K562 (cell line): ENCODE measurements at regions of chr4 and their contacts with region 1.

Region 1: DNA sequence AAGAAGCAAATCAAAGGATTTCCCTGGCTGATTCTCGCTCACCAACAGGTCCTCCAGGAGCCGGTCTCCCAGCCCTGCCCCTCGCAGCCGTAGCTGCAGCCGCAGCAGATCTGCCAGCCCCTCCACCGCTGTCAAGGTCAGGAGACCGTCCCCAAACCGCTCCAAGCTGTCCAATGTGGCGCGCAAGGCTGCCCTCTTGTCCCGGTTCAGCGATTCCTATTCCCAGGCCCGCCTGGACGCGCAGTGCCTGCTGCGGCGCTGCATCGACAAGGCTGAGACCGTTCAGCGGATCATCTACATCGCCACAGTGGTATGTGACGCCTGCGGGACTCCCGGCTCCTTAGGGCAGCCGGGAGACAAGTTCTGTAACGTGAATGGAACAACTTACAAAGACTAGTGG is 25.6 kb downstream of the SPATA18 start:
- DNase-seq: no peak
- ATAC-seq: peak; percentile 42; the same call in 2 of the 3 replicates
- H3K4me3 ChIP-seq: no peak overlapping the region
- H3K27ac ChIP-seq: no peak overlapping the region
- H3K4me1 ChIP-seq: no peaks in the 10 kb centered on the region
- H3K27me3 ChIP-seq: peaks cover 5 to 8% of the 10 kb centered on the region in 2 experiments; a peak in 1 of 5 replicates
- CTCF ChIP-seq: no peak
- EP300 ChIP-seq: no peak
- POLR2A ChIP-seq: no peak
- RAD21 ChIP-seq: no peak

Region 2: GRCh38 chr4:52001616-52002015 is 75.1 kb before region 1 on chr4:
- CTCF ChIA-PET with region 1: no interaction called
- POLR2A ChIA-PET with region 1: no interaction called
- in situ Hi-C with region 1: no loop called
- intact Hi-C with region 1: no loop called
- DNase-seq: no peak
- ATAC-seq: no peak
- H3K4me3 ChIP-seq: no peak overlapping the region
- H3K27ac ChIP-seq: no peak overlapping the region
- H3K4me1 ChIP-seq: no peaks in the 10 kb centered on the region; a peak in 1 of 5 replicates
- H3K27me3 ChIP-seq: peaks cover 0 to 2% of the 10 kb centered on the region in 2 experiments; a peak in 1 of 5 replicates
- CTCF ChIP-seq: no peak
- EP300 ChIP-seq: no peak
- POLR2A ChIP-seq: no peak
- RAD21 ChIP-seq: no peak

Region 3: DNA sequence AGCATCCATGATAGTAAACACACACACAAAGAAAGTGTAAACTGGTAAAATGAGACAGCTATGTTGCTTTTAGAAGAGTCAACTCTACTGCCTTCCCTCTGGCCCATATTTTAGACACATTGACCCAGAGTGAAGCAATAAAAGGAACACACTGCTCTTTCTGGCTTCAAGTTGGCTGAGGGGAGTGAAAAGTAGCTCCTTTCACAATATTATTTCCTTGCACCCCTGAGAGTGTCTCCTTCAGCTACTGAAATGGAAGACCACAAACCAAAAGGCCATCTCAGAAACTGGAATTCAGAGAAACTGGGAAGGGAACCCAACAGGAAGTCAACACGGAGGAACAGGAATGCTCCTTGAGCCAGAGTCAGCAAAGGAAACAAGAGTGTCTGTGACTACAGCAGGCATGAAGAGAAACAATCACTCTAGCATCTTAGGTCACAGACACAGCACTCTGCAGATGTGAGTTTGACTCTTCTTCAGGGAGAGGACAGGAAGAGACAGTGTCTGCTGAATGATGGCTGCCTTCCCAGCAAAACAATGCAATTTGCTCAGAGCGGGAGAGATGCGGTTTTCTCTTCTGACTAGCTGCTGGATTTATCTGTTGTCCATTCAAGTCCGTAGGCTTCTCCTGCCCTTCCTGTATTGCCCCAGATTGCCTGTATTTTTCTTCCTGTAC is 81.0 kb after region 1 on chr4:
- CTCF ChIA-PET with region 1: no interaction called
- POLR2A ChIA-PET with region 1: no interaction called
- in situ Hi-C with region 1: no loop called
- intact Hi-C with region 1: no loop called
- DNase-seq: no peak
- ATAC-seq: no peak
- H3K4me3 ChIP-seq: no peak overlapping the region
- H3K27ac ChIP-seq: no peak overlapping the region
- H3K4me1 ChIP-seq: no peaks in the 10 kb centered on the region
- H3K27me3 ChIP-seq: no peaks in the 10 kb centered on the region
- CTCF ChIP-seq: no peak
- EP300 ChIP-seq: no peak
- POLR2A ChIP-seq: no peak
- RAD21 ChIP-seq: no peak

Region 4: GRCh38 chr4:52329894-52330293 is 253.2 kb after region 1 on chr4:
- CTCF ChIA-PET with region 1: no interaction called
- POLR2A ChIA-PET with region 1: no interaction called
- in situ Hi-C with region 1: no loop called
- intact Hi-C with region 1: loop called (anchors 10 kb)
- DNase-seq: no peak
- ATAC-seq: no peak
- H3K4me3 ChIP-seq: no peak overlapping the region
- H3K27ac ChIP-seq: no peak overlapping the region
- H3K4me1 ChIP-seq: no peaks in the 10 kb centered on the region
- H3K27me3 ChIP-seq: no peaks in the 10 kb centered on the region
- CTCF ChIP-seq: no peak
- EP300 ChIP-seq: no peak
- POLR2A ChIP-seq: no peak
- RAD21 ChIP-seq: no peak